Activated CD4-positive, alpha-beta T cell treated with anti-CD3 and anti-CD28 coated beads, Interleukin-2, amount 10 ng/mL, durations not matched to agents 7 days and 5 days (primary cell): ENCODE measurements at regions of chr9 and their contacts with region 1.

Region 1: DNA sequence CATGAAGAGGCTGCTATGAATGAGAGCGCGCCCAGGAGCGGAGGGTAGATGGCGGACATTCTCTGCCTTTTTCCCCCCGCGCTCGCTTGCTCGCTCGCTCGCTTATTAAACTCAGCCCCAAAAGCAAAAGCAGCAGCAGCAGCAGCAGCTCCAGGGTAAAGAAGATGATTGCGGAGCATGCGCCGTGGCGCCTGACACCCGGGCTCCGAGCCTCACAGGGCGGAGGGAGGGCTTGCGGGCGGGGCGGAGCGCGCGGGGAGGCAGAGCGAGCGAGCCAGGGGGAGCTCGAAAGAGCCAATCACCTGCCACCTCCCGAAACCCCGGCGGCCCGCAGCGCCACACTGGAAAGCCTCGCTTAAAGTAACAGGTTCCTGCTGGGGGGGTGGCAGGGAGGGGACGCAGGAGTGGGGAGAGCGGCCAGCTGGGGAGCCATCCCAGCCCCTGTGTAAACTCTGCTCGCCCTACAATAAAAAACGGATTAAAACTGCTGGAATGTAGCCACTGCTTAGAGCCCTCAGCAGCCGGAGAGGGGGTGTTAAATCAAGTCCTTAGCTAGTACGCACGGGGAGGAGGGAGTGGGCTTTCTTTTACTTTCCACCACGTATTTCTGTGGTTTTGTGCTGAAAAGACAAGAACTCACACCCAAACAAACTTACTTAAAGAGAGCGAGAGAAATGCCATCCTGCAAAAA is at the start of gene MLLT3:
- DNase-seq: peak; percentile 97
- H3K4me3 Mint-ChIP-seq: peak within 1 kb of the TSS; percentile 89
- H3K27ac Mint-ChIP-seq: peak within 1 kb of the TSS; percentile 98
- H3K4me1 Mint-ChIP-seq: peaks cover 46% of the 10 kb centered on the region
- H3K27me3 Mint-ChIP-seq: no peaks in the 10 kb centered on the region
- total RNA-seq, gene MLLT3: 70.2 to 74.7 TPM

Region 2: GRCh38 chr9:20473515-20474013 is 148.9 kb before region 1 on chr9:
- CTCF ChIA-PET with region 1: no interaction called
- POLR2A ChIA-PET with region 1: no interaction called
- DNase-seq: no peak
- H3K4me3 Mint-ChIP-seq: no peak overlapping the region
- H3K27ac Mint-ChIP-seq: no peak overlapping the region
- H3K4me1 Mint-ChIP-seq: peaks cover 14% of the 10 kb centered on the region
- H3K27me3 Mint-ChIP-seq: no peaks in the 10 kb centered on the region

Region 3: DNA sequence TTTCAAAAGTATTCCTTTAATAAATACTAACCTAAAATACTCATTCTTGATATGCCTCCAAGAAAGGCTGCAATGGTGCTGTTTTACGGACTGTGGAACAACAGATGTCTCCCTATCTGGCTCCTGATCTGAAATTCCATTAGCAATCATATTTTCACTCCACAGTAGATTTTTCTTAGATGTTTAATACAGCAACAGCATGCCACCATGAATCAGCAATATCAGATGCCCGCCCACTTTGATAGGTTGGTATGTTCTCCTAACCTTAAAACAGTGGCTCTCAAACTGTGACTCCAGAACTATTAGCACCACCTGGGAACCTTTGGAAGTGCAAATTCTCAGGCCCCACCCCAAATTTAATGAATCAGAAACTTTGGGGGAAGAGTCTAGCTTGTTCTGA is 110.4 kb before region 1 on chr9:
- CTCF ChIA-PET with region 1: interaction called, 3 read pairs
- POLR2A ChIA-PET with region 1: interaction called, 12 read pairs
- DNase-seq: no peak
- H3K4me3 Mint-ChIP-seq: no peak overlapping the region
- H3K27ac Mint-ChIP-seq: no peak overlapping the region
- H3K4me1 Mint-ChIP-seq: peaks cover 84% of the 10 kb centered on the region
- H3K27me3 Mint-ChIP-seq: no peaks in the 10 kb centered on the region

Region 4: DNA sequence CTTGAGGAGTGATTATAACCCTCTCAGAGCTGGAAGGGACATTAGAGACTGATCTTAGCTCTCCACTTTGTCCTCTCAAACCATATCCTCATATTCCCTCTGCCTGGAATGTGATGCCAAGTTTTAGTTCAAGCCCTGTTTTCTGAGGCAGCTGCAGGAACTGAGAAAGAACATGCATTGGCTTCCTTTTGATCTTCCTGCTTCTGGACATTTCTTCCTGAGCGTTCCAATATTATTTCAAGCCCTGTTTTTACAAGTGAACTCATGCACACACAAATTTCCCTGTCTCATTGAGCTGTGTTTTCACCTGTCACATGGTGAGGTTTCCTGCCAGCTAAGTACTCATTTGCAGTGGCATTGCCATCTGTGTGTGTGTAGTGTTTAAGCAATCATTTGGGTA is 78.6 kb after region 1 on chr9:
- CTCF ChIA-PET with region 1: no interaction called
- POLR2A ChIA-PET with region 1: no interaction called
- DNase-seq: no peak
- H3K4me3 Mint-ChIP-seq: no peak overlapping the region
- H3K27ac Mint-ChIP-seq: no peak overlapping the region
- H3K4me1 Mint-ChIP-seq: peaks cover 5% of the 10 kb centered on the region
- H3K27me3 Mint-ChIP-seq: no peaks in the 10 kb centered on the region

Region 5: DNA sequence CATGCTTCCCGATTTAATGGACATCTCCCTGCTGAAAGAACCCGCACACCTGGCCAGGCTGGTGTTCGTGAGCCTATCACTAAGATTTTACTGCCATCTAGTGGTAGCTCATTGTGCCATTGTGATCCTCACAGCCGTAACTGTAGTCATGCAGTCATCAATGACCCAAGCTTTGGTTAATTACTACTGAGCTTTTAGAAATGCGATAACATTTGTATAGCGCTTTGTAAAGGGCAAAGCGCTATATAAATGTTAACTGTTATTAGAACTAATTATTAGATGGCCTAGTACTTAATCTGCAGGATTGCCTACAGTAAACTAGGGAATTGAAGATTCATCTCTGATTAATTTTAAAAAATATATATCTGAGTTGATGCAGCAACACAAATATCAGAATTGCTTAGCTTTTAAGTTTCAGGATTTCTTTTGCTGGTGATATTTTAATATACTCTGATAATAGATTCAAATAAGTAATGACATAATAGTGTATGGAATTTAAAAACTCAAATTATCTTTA is 318.8 kb after region 1 on chr9:
- CTCF ChIA-PET with region 1: interaction called, 14 read pairs
- POLR2A ChIA-PET with region 1: no interaction called
- DNase-seq: peak; percentile 73
- H3K4me3 Mint-ChIP-seq: no peak overlapping the region
- H3K27ac Mint-ChIP-seq: no peak overlapping the region
- H3K4me1 Mint-ChIP-seq: peaks cover 4% of the 10 kb centered on the region
- H3K27me3 Mint-ChIP-seq: no peaks in the 10 kb centered on the region